Pancreas (tissue), 10 donors: ENCODE measurements at regions of chr17 and their contacts with region 1.

Region 1: DNA sequence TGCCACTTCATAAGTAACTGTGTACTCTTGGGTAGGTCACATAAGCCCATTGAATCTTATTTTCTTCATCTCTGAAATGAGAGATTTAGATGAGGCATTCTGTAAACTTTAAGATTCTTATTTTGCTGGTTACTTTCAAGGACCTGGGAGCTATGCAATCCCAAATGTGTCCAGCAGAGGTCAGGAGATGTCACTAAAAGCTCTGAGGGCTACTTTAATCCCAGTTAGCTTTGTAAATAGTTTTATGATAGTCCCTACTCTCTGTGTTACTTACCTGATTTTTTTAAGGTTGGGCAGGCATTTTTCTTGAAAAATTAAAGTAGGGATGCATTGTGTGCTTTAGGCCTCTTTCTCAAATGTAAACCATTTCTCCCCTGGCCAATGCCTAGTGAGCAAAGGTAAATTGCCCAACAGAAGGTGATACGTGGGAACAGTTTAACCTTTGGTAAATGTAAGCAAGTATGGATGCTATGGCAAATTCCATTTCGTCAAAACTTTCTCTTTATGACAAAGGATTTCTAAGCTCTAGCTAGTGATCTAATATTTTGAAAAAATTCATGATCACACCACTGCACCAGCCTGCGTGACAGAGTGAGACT is 57.1 kb upstream of the WSB1 start:
- DNase-seq: peak in 5 of 6 donors; percentile 55 to 85 (median 71)
- ATAC-seq: peak; percentile 82 to 93 (median 93)
- H3K4me3 ChIP-seq: no peak overlapping the region
- H3K27ac ChIP-seq: no peak overlapping the region
- H3K4me1 ChIP-seq: peaks cover 0 to 4% (median 0%) of the 10 kb centered on the region in 3 donors
- H3K27me3 ChIP-seq: no peaks in the 10 kb centered on the region
- CTCF ChIP-seq: peak; percentile 79 to 92 (median 85)

Region 2: GRCh38 chr17:27332485-27333409 is 95.9 kb after region 1 on chr17:
- intact Hi-C with region 1: loop called in 1 of 3 experiments (anchors 5 kb)
- DNase-seq: peak; percentile 95 to 99 (median 99)
- ATAC-seq: peak; percentile 95 to 98 (median 96)
- H3K4me3 ChIP-seq: peak overlapping the region; percentile 8 to 48 (median 26)
- H3K27ac ChIP-seq: peak overlapping the region; percentile 67 to 92 (median 87)
- H3K4me1 ChIP-seq: peaks cover 0 to 8% (median 5%) of the 10 kb centered on the region in 3 donors
- H3K27me3 ChIP-seq: no peaks in the 10 kb centered on the region
- CTCF ChIP-seq: peak; percentile 86 to 88 (median 86)